AG04449 (cell line): ENCODE measurements at regions of chr7 and their contacts with region 1.

Region 1: DNA sequence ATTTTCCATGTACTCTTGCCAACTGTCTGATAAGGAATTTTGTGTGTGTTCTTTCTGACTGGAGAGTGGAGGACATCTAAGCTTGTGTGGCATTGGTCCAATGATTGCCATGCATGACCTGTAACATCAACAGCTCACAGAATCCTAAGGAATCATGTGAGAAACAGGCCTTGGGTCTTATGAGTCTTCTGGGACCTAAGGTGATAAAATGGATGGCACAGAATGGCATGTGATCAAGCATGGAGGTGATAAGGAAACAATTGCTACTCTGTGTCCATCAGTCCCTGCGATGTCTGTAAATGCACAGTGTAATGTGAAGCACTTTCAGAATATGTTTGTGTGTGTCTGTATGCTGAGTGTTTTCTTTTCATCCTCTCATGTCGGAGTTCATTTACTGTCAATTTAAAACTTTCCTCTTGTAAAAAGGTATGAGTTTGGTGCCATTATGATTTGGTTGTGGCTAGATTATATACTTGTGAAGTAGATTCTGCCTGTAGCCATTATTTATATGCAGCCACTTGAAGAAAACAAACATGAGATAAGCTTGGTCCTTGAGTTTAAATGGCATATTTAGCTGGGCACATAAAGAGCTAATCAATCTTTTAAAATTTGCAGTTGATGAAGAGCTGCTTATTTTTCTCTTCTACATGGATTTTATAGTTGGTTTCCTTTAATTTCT is 127.5 kb downstream of the VPS50 start:
- DNase-seq: no peak
- H3K4me3 ChIP-seq: no peak overlapping the region
- CTCF ChIP-seq: no peak

Region 2: DNA sequence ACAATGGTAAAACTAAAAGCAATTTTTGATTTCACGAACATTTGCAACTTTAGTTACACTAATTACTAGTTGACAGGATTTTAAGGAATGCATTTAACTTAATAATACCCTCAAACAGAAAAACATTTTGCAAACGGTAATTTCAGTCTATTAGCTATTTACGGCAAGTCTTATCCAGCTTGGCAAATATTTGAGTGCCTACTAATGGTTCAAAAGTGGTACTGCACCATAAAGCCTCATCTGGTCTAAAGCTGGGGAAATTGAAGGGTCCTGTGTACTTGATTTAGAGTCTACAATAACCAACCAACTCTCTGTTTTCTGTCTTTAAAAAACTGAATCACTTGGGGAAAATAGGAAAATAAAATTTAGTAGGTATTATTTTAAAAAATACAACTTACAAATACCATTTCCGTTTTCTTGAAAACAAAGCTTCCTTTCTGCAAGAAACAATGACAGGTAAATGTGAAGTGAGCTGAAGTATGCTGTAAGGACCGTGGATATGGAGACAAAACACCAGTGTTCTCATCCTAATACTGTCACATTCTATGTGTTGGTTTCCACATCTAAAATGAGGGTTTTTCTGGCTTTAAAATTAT is 14.8 kb after region 1 on chr7:
- CTCF ChIA-PET with region 1: interaction called, 12 read pairs
- POLR2A ChIA-PET with region 1: no interaction called
- DNase-seq: no peak
- H3K4me3 ChIP-seq: no peak overlapping the region
- CTCF ChIP-seq: peak; percentile 68